Right ventricle myocardium superior (tissue), 1 donor: ENCODE measurements at regions of chr22 and their contacts with region 1.

Region 1: GRCh38 chr22:44080936-44081861 is 57.1 kb downstream of the PARVB start:
- DNase-seq: peak; percentile 83
- ATAC-seq: no peak

Region 2: GRCh38 chr22:43993027-43993760 is 88.0 kb before region 1 on chr22:
- intact Hi-C with region 1: loop called (anchors 5 kb)
- DNase-seq: peak; percentile 73
- ATAC-seq: peak; percentile 78

Region 3: DNA sequence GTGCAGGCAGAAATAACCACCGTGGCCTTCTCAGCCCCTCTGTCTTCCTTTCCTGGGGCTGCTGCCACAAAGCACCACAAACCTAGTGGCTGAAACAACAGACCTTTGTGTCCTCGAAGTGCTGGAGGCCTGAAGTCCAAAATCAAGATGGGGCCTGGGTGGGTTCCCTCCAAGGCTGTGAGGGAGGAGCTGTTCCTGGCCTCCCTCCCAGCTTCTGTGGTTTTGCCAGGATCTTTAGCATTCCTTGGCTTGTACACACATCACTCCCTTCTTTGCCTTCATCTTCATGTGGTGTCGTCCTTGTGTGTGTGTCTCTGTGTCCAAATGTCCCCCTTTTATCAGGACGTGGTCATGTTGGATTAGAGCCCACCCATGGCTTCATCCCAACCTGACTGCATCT is 70.5 kb after region 1 on chr22:
- intact Hi-C with region 1: no loop called
- DNase-seq: no peak
- ATAC-seq: no peak